ENCODE measurements at regions of chr17 and their contacts with region 1.

Region 1: GRCh38 chr17:18248300-18248731 is 10.2 kb downstream of the FLII start:
- DNase-seq: peak; percentile 72 to 76 (median 76)
- H3K4me3 ChIP-seq: no peak overlapping the region
- H3K27ac ChIP-seq: peak overlapping the region in 1 of 2 donors; percentile 51
- H3K4me1 ChIP-seq: peaks cover 2% of the 10 kb centered on the region
- H3K27me3 ChIP-seq: no peaks in the 10 kb centered on the region
- CTCF ChIP-seq: peak in 2 of 3 donors; percentile 67 to 71
- EP300 ChIP-seq: no peak
- POLR2A ChIP-seq: no peak

Region 2: DNA sequence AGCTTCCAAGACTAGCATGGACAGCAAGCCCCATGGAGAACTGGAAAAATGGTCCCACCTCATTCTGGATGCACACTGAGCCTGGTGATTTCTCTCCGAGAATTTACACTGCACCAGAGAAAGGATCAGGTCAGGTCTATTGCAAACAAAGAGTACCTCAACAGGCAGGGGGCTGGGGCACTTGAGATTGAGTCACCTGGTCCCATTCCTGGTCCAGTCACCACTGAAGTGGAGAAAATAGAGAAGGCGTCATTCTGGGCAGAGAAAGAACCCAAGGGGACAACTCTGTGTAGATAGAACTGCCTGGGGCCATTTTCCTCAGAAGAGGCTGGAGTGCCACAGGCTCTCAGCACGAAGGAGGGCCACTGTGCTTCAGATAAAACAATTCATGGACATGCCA is 1933.5 kb before region 1 on chr17:
- intact Hi-C with region 1: loop called in 1 of 4 experiments (anchors 5 kb)
- DNase-seq: peak in 1 of 5 donors; percentile 1
- H3K4me3 ChIP-seq: no peak overlapping the region
- H3K27ac ChIP-seq: no peak overlapping the region
- H3K4me1 ChIP-seq: no peaks in the 10 kb centered on the region
- H3K27me3 ChIP-seq: no peaks in the 10 kb centered on the region
- CTCF ChIP-seq: no peak
- EP300 ChIP-seq: no peak
- POLR2A ChIP-seq: no peak

Region 3: GRCh38 chr17:18038861-18039534 is 209.3 kb before region 1 on chr17 and contains the starts of genes ATPAF2 and GID4:
- intact Hi-C with region 1: no loop called
- DNase-seq: peak; percentile 99 to 100 (median 100)
- H3K4me3 ChIP-seq: peak within 1 kb of the TSS; percentile 91
- H3K27ac ChIP-seq: peak within 1 kb of the TSS; percentile 61 to 68
- H3K4me1 ChIP-seq: peaks cover 7% of the 10 kb centered on the region
- H3K27me3 ChIP-seq: no peaks in the 10 kb centered on the region
- CTCF ChIP-seq: peak in 1 of 3 donors; percentile 24
- EP300 ChIP-seq: no peak
- POLR2A ChIP-seq: peak; percentile 18
- total RNA-seq, gene ATPAF2: 5.5 to 18.6 (median 15.5) TPM
- total RNA-seq, gene GID4: 6.0 to 13.2 (median 11.2) TPM

Region 4: DNA sequence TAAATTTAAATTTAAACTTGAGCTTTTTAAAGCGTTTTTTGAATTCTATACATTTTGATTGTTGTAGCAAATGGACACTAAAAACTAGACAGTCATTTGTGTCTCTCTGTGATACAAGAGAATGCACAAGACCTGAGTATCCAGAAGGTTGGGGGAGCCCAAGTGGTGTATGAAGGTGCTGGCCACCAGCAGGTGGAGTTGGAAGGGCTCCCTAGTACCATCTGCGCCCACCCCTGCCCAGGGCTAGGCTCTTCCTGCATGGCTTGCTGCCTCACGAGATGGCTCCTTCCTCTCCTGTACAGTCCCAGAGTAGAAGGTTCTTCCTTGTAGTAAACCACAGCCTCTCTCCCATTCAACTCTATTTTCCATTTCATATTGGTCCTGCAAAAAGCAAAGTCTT is 192.1 kb before region 1 on chr17:
- intact Hi-C with region 1: no loop called
- DNase-seq: no peak
- H3K4me3 ChIP-seq: no peak overlapping the region
- H3K27ac ChIP-seq: no peak overlapping the region
- H3K4me1 ChIP-seq: no peaks in the 10 kb centered on the region
- H3K27me3 ChIP-seq: no peaks in the 10 kb centered on the region
- CTCF ChIP-seq: no peak
- EP300 ChIP-seq: no peak
- POLR2A ChIP-seq: no peak

Measured in ovary (tissue), 10 donors.